Esophagus muscularis mucosa (tissue), 4 donors: ENCODE measurements at regions of chr5 and their contacts with region 1.

Region 1: DNA sequence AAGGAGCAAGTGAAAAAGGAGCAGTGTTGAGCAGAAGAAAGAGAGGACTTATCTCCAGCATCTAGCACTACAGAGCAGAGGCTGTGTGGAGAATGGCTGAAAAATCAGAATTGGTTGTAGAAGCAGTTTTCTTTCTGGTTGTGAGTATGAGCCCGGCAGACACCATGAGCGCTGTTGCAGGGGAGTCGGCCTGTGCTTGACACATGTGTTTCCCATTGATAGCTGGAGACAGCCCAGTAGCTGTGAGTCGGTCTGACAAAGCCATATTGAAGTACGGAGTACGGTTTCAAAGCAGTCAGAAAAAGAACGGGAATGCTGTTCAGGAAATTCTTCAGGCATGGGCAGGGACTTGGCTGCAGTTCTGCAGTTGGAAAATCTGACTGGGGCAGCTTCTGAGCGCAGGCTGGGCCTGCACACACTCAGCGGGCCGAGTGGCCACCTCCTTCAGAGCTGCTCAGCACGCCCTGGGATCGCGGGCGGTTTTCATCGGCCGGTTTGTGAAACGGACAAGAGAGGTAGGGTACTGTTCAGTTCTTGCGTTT is at the start of gene SGCD:
- DNase-seq: no peak
- H3K4me3 ChIP-seq: peak within 1 kb of the TSS; percentile 55 to 62 (median 58)
- H3K27ac ChIP-seq: peak within 1 kb of the TSS; percentile 75 to 87 (median 80)
- H3K4me1 ChIP-seq: peaks cover 0 to 39% (median 31%) of the 10 kb centered on the region in 4 donors
- H3K27me3 ChIP-seq: no peaks in the 10 kb centered on the region
- CTCF ChIP-seq: peak in 1 of 3 experiments; percentile 9
- EP300 ChIP-seq: no peak
- POLR2A ChIP-seq: no peak
- total RNA-seq, gene SGCD: 16.7 to 38.6 (median 27.7) TPM

Region 2: GRCh38 chr5:156271569-156271968 is 55.2 kb before region 1 on chr5:
- intact Hi-C with region 1: no loop called
- DNase-seq: no peak
- H3K4me3 ChIP-seq: no peak overlapping the region
- H3K27ac ChIP-seq: no peak overlapping the region
- H3K4me1 ChIP-seq: peaks cover 0 to 8% (median 2%) of the 10 kb centered on the region in 4 donors
- H3K27me3 ChIP-seq: no peaks in the 10 kb centered on the region
- CTCF ChIP-seq: no peak
- EP300 ChIP-seq: no peak
- POLR2A ChIP-seq: no peak

Region 3: GRCh38 chr5:156295431-156295830 is 31.4 kb before region 1 on chr5:
- intact Hi-C with region 1: no loop called
- DNase-seq: no peak
- H3K4me3 ChIP-seq: no peak overlapping the region
- H3K27ac ChIP-seq: no peak overlapping the region
- H3K4me1 ChIP-seq: no peaks in the 10 kb centered on the region
- H3K27me3 ChIP-seq: no peaks in the 10 kb centered on the region
- CTCF ChIP-seq: no peak
- EP300 ChIP-seq: no peak
- POLR2A ChIP-seq: no peak

Region 4: GRCh38 chr5:156367597-156367996 is 40.8 kb after region 1 on chr5:
- intact Hi-C with region 1: loop called (anchors 5 kb)
- DNase-seq: no peak
- H3K4me3 ChIP-seq: no peak overlapping the region
- H3K27ac ChIP-seq: no peak overlapping the region
- H3K4me1 ChIP-seq: peaks cover 0 to 19% (median 10%) of the 10 kb centered on the region in 4 donors
- H3K27me3 ChIP-seq: no peaks in the 10 kb centered on the region
- CTCF ChIP-seq: no peak
- EP300 ChIP-seq: no peak
- POLR2A ChIP-seq: no peak

Region 5: DNA sequence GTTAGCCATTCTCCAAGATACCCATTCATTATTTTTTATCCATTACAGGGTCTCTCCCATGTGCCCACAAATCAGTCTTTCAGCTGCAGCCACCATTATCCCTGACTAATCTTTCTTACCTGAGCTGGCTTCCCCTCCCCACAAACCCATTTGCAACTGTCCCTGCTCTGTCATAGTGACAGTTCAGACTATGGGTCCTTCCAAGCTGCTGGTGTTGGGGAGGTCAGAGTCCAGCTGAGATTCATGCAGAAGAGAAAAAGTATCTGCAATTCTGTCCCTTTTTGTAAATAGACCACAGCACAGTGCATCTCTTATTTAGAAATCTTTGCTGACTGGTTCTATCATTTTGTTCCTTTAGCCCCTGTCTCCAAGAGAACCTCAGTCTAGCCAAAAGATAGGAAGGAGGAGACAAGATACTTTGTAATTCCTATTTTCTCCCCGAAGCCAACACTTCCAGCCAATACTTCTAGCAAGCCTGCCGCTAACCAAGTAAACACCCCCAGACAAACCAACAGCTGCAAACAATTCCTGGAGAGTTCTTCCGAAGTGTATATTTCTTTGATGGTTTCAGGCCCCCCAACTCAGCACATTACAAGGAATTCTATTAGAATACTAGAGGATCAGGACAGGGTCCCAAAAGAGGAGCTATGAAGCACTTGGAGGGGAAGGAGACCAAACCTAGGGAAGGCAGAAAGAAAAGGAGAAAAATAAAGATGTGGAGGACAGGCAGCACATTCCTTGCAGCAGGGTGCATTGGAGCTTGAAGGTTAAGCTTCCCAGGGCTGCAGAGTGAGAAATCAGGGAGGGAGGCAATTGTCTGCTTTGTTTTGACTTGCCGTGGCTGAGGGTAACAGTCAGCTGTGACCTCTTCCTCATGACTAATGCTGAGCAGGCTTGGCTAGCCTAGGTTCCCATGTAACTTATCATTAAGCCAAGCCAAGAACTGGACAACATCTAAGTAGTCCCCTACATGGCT is 148.7 kb after region 1 on chr5:
- intact Hi-C with region 1: loop called (anchors 10 kb)
- DNase-seq: no peak
- H3K4me3 ChIP-seq: no peak overlapping the region
- H3K27ac ChIP-seq: peak overlapping the region; percentile 63 to 78 (median 69)
- H3K4me1 ChIP-seq: peaks cover 38 to 56% (median 50%) of the 10 kb centered on the region in 4 donors
- H3K27me3 ChIP-seq: no peaks in the 10 kb centered on the region
- CTCF ChIP-seq: peak; percentile 16 to 32 (median 17)
- EP300 ChIP-seq: no peak
- POLR2A ChIP-seq: no peak

Region 6: DNA sequence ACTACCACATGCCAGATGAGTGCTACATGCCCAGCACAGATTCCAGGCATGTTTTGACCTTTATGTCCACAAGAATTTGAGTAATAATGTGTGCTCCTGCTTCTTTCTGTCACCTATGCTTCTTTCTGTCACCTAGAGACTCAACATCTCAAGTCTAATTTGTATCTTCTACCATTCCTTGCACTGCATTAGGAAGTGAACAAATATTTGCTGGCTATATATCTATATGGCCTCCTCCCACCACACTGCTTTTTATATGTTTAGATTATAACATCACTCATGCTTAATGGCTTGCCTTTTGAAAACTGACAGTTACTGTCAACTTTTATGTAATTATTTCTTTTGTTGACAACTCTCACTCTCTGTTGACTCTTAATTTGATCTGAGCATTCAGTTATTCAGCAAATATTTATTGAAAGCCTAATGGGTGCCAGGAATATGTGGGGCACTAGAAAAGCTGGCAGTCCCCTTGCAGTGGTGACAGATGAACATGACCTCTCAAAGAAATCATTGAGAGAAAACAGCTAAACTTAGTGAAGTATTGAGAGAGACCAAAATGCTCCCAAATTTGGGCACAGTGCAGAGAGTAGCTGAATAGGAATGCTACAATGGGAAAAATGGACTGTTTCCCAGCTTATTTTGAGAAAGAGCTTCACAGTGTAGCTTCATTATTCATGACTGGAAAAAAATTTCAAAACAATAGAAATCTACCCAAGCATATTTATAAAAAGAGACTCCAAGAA is 257.9 kb after region 1 on chr5:
- intact Hi-C with region 1: loop called (anchors 5 kb)
- DNase-seq: no peak
- H3K4me3 ChIP-seq: no peak overlapping the region
- H3K27ac ChIP-seq: peak overlapping the region; percentile 73 to 84 (median 81)
- H3K4me1 ChIP-seq: peaks cover 30 to 71% (median 52%) of the 10 kb centered on the region in 4 donors
- H3K27me3 ChIP-seq: no peaks in the 10 kb centered on the region
- CTCF ChIP-seq: no peak
- EP300 ChIP-seq: no peak
- POLR2A ChIP-seq: no peak

Region 7: GRCh38 chr5:156947796-156948324 is 621.1 kb after region 1 on chr5:
- intact Hi-C with region 1: no loop called
- DNase-seq: no peak
- H3K4me3 ChIP-seq: no peak overlapping the region
- H3K27ac ChIP-seq: no peak overlapping the region
- H3K4me1 ChIP-seq: no peaks in the 10 kb centered on the region
- H3K27me3 ChIP-seq: no peaks in the 10 kb centered on the region
- CTCF ChIP-seq: no peak
- EP300 ChIP-seq: no peak
- POLR2A ChIP-seq: no peak